ENCODE measurements at regions of chr2 and their contacts with region 1.

Region 1: GRCh38 chr2:60550178-60550983 is 3.1 kb downstream of the BCL11A start:
- DNase-seq: peak; percentile 67 to 79 (median 76)
- ATAC-seq: peak; percentile 78 to 81 (median 79)
- H3K4me3 ChIP-seq: peak overlapping the region; percentile 19 to 80 (median 68)
- H3K27ac ChIP-seq: peak overlapping the region in 11 of 12 donors; percentile 63 to 89 (median 76)
- H3K4me1 ChIP-seq: peaks cover 0 to 69% (median 35%) of the 10 kb centered on the region in 12 donors
- H3K27me3 ChIP-seq: peaks cover 17 to 93% (median 59%) of the 10 kb centered on the region in 9 donors
- CTCF ChIP-seq: peak in 11 of 12 donors; percentile 29 to 66 (median 48)
- POLR2A ChIP-seq: no peak

Region 2: GRCh38 chr2:59025157-59025757 is 1525.1 kb before region 1 on chr2:
- intact Hi-C with region 1: loop called in 2 of 10 experiments (anchors 10 kb)
- DNase-seq: peak in 1 of 5 donors; percentile 58
- ATAC-seq: peak in 1 of 4 donors; percentile 55
- H3K4me3 ChIP-seq: no peak overlapping the region
- H3K27ac ChIP-seq: no peak overlapping the region
- H3K4me1 ChIP-seq: no peaks in the 10 kb centered on the region
- H3K27me3 ChIP-seq: peaks cover 0 to 7% (median 0%) of the 10 kb centered on the region in 9 donors
- CTCF ChIP-seq: peak; percentile 30 to 62 (median 53)
- POLR2A ChIP-seq: no peak

Region 3: GRCh38 chr2:59301466-59302402 is 1248.6 kb before region 1 on chr2:
- intact Hi-C with region 1: loop called in 6 of 10 experiments (anchors 5 to 10 kb)
- DNase-seq: peak in 3 of 5 donors; percentile 22 to 31 (median 29)
- ATAC-seq: peak; percentile 69 to 91 (median 74)
- H3K4me3 ChIP-seq: no peak overlapping the region
- H3K27ac ChIP-seq: no peak overlapping the region
- H3K4me1 ChIP-seq: peaks cover 0 to 6% (median 0%) of the 10 kb centered on the region in 12 donors
- H3K27me3 ChIP-seq: no peaks in the 10 kb centered on the region
- CTCF ChIP-seq: peak; percentile 32 to 73 (median 54)
- POLR2A ChIP-seq: no peak

Region 4: DNA sequence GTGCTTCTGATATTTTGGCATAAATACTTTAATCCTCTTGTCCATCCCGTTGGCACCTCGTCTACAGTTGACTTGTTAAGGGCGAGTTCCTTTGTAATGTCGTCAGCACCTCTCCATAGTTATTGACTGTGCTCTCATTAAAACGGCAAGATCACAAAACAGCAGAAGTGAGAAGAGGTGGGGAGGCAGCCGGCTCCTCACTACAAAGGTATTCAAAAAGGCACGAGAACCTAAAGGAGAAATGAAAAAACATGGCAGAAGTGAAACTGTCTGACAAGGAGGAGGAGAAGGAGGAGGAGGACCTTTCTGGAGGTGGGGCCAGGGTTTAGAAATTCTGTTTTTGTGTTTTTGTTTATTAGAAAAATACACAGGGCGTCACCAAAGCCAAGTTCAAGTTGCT is 232.5 kb before region 1 on chr2:
- intact Hi-C with region 1: loop called in 1 of 10 experiments (anchors 5 kb)
- DNase-seq: no peak
- ATAC-seq: peak; percentile 48 to 84 (median 76)
- H3K4me3 ChIP-seq: peak overlapping the region in 6 of 12 donors; percentile 1 to 30 (median 10)
- H3K27ac ChIP-seq: no peak overlapping the region
- H3K4me1 ChIP-seq: peaks cover 0 to 19% (median 0%) of the 10 kb centered on the region in 12 donors
- H3K27me3 ChIP-seq: peaks cover 0 to 5% (median 0%) of the 10 kb centered on the region in 9 donors
- CTCF ChIP-seq: no peak
- POLR2A ChIP-seq: no peak

Region 5: GRCh38 chr2:60439219-60439974 is 111.0 kb before region 1 on chr2:
- intact Hi-C with region 1: loop called in 2 of 10 experiments (anchors 1 to 5 kb)
- DNase-seq: peak; percentile 54 to 76 (median 58)
- ATAC-seq: peak; percentile 74 to 87 (median 77)
- H3K4me3 ChIP-seq: peak overlapping the region in 11 of 12 donors; percentile 16 to 46 (median 43)
- H3K27ac ChIP-seq: peak overlapping the region in 11 of 12 donors; percentile 44 to 84 (median 75)
- H3K4me1 ChIP-seq: peaks cover 0 to 37% (median 9%) of the 10 kb centered on the region in 12 donors
- H3K27me3 ChIP-seq: peaks cover 0 to 3% (median 0%) of the 10 kb centered on the region in 9 donors
- CTCF ChIP-seq: peak in 11 of 12 donors; percentile 22 to 57 (median 40)
- POLR2A ChIP-seq: no peak

Region 6: GRCh38 chr2:60498816-60499429 is 51.5 kb before region 1 on chr2:
- intact Hi-C with region 1: loop called in 2 of 10 experiments (anchors 2 to 5 kb)
- DNase-seq: no peak
- ATAC-seq: no peak
- H3K4me3 ChIP-seq: no peak overlapping the region
- H3K27ac ChIP-seq: peak overlapping the region in 2 of 12 donors; percentile 43 to 61
- H3K4me1 ChIP-seq: peaks cover 0 to 50% (median 11%) of the 10 kb centered on the region in 12 donors
- H3K27me3 ChIP-seq: no peaks in the 10 kb centered on the region
- CTCF ChIP-seq: no peak
- POLR2A ChIP-seq: no peak